Activated CD4-positive, alpha-beta memory T cell treated with anti-CD3 and anti-CD28 coated beads for 36 hours (primary cell): ENCODE measurements at regions of chr3 and their contacts with region 1.

Region 1: DNA sequence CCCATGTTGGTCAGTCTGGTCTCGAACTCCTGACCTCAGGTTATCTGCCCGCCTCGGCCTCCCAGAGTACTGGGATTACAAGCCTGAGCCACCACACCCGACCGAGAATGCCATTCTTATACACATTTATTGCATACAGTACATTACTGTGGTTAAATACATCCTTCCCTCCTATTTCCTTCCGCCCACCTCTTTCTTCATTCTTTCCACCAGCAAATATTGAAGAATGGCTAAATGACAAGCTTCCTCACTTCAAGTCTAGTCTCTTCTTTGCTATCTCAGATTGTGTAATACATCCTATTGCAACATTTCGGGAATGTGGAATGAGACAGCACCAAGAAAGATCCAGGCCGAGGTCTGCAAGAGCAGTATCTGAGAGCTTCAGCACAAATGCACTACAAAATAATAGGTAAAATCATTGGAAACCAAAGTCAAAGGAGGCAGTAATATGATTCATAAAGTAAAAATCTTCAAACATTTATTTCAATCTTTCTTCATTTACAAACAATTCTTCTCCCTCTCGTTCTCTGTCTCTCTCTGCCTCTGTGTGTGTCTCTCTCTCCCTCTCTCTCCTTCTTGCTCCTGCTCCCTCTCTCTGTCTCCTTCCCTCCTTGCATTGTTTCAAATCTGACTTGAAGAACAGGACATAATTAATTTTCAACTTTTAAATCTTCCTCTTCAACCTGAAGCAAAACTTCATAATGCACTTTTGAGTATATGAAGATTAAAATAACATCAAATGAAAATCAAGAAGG is 94.7 kb upstream of the TGFBR2 start:
- DNase-seq: peak; percentile 34
- H3K4me3 Mint-ChIP-seq: no peak overlapping the region
- H3K27ac Mint-ChIP-seq: no peak overlapping the region
- H3K4me1 Mint-ChIP-seq: peaks cover 7% of the 10 kb centered on the region
- H3K27me3 Mint-ChIP-seq: no peaks in the 10 kb centered on the region

Region 2: DNA sequence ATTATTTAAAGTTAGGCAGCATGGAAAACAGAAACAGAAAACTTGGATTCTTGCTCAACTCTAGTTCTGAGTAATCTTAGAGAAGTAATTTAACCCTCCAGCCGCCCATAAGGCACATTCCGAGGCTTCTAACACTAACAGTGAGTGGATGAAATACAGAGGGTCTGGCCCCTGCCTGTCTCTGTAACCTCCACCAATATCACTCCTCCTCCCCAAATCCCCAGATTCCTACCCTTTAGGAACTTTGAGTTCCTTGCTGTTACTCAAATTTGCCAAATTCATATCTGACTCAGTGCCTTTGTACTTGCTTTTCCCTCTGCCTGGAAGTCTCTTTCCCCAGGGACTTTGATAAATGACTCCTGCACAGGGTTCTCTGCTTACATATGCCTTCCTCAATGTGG is 17.8 kb before region 1 on chr3:
- CTCF ChIA-PET with region 1: no interaction called
- POLR2A ChIA-PET with region 1: no interaction called
- intact Hi-C with region 1: no loop called
- DNase-seq: no peak
- H3K4me3 Mint-ChIP-seq: no peak overlapping the region
- H3K27ac Mint-ChIP-seq: no peak overlapping the region
- H3K4me1 Mint-ChIP-seq: no peaks in the 10 kb centered on the region
- H3K27me3 Mint-ChIP-seq: no peaks in the 10 kb centered on the region

Region 3: DNA sequence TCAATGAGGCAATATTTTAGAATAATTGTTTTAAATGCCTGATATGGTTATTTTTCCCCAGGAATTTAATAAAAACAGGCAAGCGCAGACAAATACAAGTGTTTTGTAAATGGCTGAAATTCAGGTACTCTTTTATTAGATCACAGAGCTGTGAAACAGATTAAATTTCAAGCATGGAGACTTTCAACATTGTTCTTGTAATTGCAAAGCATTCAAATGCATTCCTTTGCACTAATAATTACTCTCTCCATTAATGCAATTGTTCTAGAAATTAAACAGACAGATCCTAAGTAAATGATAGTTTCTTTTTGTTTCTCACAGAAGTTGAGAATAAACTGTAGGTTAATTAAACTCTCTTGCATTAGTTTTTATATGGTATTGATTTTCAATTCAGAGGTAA is 52.3 kb after region 1 on chr3:
- CTCF ChIA-PET with region 1: no interaction called
- POLR2A ChIA-PET with region 1: no interaction called
- intact Hi-C with region 1: no loop called
- DNase-seq: no peak
- H3K4me3 Mint-ChIP-seq: no peak overlapping the region
- H3K27ac Mint-ChIP-seq: no peak overlapping the region
- H3K4me1 Mint-ChIP-seq: no peaks in the 10 kb centered on the region
- H3K27me3 Mint-ChIP-seq: no peaks in the 10 kb centered on the region

Region 4: GRCh38 chr3:30578479-30578878 is 66.8 kb after region 1 on chr3:
- CTCF ChIA-PET with region 1: no interaction called
- POLR2A ChIA-PET with region 1: no interaction called
- intact Hi-C with region 1: loop called (anchors 5 kb)
- DNase-seq: no peak
- H3K4me3 Mint-ChIP-seq: no peak overlapping the region
- H3K27ac Mint-ChIP-seq: no peak overlapping the region
- H3K4me1 Mint-ChIP-seq: peaks cover 9% of the 10 kb centered on the region
- H3K27me3 Mint-ChIP-seq: no peaks in the 10 kb centered on the region

Region 5: DNA sequence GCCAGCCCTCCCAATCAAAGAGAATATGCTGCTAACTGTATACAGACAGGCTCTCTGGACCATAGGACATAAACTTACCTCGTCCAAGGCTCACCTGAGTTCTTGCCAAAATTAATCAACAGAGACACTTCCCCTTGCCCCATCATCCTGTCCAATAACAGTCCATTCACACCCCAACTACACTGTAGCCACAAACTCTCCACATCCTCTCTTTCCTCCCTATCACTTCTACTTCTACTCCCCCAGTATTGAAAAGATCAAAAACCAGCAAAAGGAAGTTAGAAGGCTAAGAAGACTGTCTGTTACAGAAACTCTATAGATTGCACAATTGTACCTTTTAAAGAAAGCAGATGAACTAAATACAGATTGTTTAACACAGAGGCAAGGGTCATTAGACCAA is 887.6 kb after region 1 on chr3:
- CTCF ChIA-PET with region 1: no interaction called
- POLR2A ChIA-PET with region 1: no interaction called
- intact Hi-C with region 1: no loop called
- DNase-seq: no peak
- H3K4me3 Mint-ChIP-seq: no peak overlapping the region
- H3K27ac Mint-ChIP-seq: no peak overlapping the region
- H3K4me1 Mint-ChIP-seq: peaks cover 21% of the 10 kb centered on the region
- H3K27me3 Mint-ChIP-seq: no peaks in the 10 kb centered on the region